ENCODE measurements at regions of chr7 and their contacts with region 1.

Region 1: GRCh38 chr7:116588641-116589594 is 64.1 kb downstream of the CAV1 start:
- DNase-seq: peak; percentile 81
- ATAC-seq: peak; percentile 60
- H3K4me3 ChIP-seq: no peak overlapping the region
- H3K27ac ChIP-seq: peak overlapping the region; percentile 80
- H3K4me1 ChIP-seq: peaks cover 9% of the 10 kb centered on the region
- H3K27me3 ChIP-seq: no peaks in the 10 kb centered on the region
- CTCF ChIP-seq: peak; percentile 78
- POLR2A ChIP-seq: 0 out of 2 replicates have a peak, but pooled peaks have one; percentile 17
- RAD21 ChIP-seq: peak; percentile 87

Region 2: GRCh38 chr7:116173051-116174028 is 415.6 kb before region 1 on chr7:
- CTCF ChIA-PET with region 1: interaction called, 6 read pairs
- POLR2A ChIA-PET with region 1: interaction called, 3 read pairs
- dilution Hi-C with region 1: no loop called
- in situ Hi-C with region 1: loop called (anchors 10 kb)
- intact Hi-C with region 1: loop called (anchors 2 kb)
- DNase-seq: peak; percentile 69
- ATAC-seq: peak; percentile 31
- H3K4me3 ChIP-seq: no peak overlapping the region
- H3K27ac ChIP-seq: no peak overlapping the region
- H3K4me1 ChIP-seq: peaks cover 15% of the 10 kb centered on the region
- H3K27me3 ChIP-seq: no peaks in the 10 kb centered on the region
- CTCF ChIP-seq: peak; percentile 71
- POLR2A ChIP-seq: no peak
- RAD21 ChIP-seq: peak; percentile 87

Region 3: GRCh38 chr7:116258734-116259133 is 330.2 kb before region 1 on chr7:
- CTCF ChIA-PET with region 1: interaction called, 11 read pairs
- POLR2A ChIA-PET with region 1: no interaction called
- dilution Hi-C with region 1: no loop called
- in situ Hi-C with region 1: no loop called
- intact Hi-C with region 1: loop called (anchors 1 kb)
- DNase-seq: peak; percentile 79
- ATAC-seq: peak; percentile 75
- H3K4me3 ChIP-seq: no peak overlapping the region
- H3K27ac ChIP-seq: peak overlapping the region; percentile 49; the same call in 1 of the 2 replicates
- H3K4me1 ChIP-seq: peaks cover 11% of the 10 kb centered on the region; the same call in 1 of the 2 replicates
- H3K27me3 ChIP-seq: no peaks in the 10 kb centered on the region
- CTCF ChIP-seq: peak; percentile 91
- POLR2A ChIP-seq: 0 out of 2 replicates have a peak, but pooled peaks have one; percentile 39
- RAD21 ChIP-seq: peak; percentile 95

Region 4: DNA sequence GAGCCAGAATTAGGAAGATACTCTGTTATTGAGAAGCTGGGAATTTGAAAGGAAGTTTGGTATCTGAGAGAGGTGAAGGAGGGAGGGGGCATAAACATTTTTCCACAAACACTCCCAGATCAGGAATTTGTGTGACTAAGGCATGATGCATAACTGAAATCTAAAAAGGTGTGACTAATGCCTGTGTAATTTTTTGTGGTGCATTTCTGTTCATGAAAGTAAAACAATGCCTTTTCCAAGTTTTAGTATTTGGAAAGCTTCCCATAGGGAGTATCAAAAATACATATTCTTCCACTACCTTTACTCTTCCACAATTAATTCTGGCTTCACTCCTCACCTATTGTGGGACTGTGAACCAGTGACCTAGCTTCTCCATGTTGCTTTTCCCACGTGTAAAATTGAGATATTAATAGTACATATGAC is 145.8 kb before region 1 on chr7:
- CTCF ChIA-PET with region 1: interaction called, 3 read pairs
- POLR2A ChIA-PET with region 1: no interaction called
- dilution Hi-C with region 1: no loop called
- in situ Hi-C with region 1: no loop called
- intact Hi-C with region 1: loop called (anchors 10 kb)
- DNase-seq: peak; percentile 97
- ATAC-seq: peak; percentile 76
- H3K4me3 ChIP-seq: no peak overlapping the region
- H3K27ac ChIP-seq: 0 out of 2 replicates have a peak overlapping the region, but pooled peaks have one; percentile 87
- H3K4me1 ChIP-seq: peaks cover 14% of the 10 kb centered on the region
- H3K27me3 ChIP-seq: no peaks in the 10 kb centered on the region
- CTCF ChIP-seq: no peak
- POLR2A ChIP-seq: no peak
- RAD21 ChIP-seq: no peak

Region 5: DNA sequence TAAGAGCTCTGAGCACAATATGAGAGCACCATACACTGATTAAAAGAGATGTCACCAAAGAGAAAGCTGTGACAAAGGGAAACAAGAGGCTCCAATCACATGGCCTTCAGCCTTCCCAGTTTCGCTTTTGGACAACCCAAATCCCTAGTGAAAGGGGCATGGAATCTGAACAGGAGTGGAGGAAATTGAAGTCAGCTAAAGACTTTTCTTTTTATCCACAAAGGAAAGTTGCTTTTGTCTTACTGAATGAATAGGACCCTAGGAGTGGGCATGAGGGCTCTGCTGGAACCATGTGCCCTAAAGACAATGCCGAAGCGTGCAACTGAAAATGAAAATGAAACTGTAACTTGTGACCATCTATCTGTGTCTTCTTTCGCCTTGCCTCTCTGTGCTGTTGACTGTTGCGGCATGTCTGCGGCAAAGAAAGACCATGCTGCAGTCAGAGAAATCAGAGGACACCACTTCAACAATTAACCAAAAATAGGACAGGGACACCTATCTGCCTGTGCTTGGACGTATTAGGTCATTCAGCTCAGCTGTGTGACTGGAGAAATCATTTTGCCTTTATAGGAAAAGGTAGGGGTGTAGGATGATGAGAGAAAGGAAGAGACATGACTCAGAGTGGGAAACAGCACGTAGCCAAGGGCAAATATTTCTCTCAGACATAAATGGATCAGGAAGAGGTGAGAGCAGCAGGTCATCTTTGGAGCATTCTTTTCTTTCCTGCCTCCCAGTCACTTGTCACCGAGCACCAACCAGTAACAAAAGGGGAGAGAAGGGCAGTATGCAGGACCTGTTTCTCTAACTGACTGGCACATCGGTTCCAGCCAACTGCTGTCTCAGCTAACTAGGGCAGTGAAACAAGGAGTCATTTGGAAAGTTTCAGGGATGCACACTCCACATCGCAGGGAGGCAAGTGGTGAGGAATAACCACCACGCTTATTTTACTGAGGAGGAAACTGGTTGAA is 77.1 kb before region 1 on chr7:
- CTCF ChIA-PET with region 1: no interaction called
- POLR2A ChIA-PET with region 1: no interaction called
- dilution Hi-C with region 1: no loop called
- in situ Hi-C with region 1: no loop called
- intact Hi-C with region 1: no loop called
- DNase-seq: peak; percentile 69
- ATAC-seq: peak; percentile 69
- H3K4me3 ChIP-seq: peak overlapping the region; percentile 7; the same call in 1 of the 2 replicates
- H3K27ac ChIP-seq: peak overlapping the region; percentile 78
- H3K4me1 ChIP-seq: peaks cover 8% of the 10 kb centered on the region
- H3K27me3 ChIP-seq: no peaks in the 10 kb centered on the region
- CTCF ChIP-seq: no peak
- POLR2A ChIP-seq: no peak
- RAD21 ChIP-seq: no peak

Region 6: DNA sequence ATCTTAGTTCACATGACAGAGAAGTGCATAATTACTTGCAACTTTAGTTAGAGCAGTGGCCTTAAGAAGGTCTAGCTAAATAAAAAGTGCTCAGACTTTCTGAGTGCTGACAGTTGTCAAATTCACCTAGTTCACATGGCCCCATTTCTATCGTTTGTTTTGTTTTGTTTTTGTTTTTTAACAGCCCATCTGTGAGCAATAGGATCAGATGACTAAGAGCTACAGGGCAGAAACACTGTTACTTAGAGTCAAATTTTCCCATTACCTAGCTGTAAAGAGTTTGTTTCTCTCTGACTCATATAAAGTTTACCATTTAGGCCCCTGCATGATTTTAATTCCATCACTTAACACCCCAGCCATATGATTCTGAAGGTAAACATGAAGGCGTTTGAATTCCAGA is 45.3 kb before region 1 on chr7:
- CTCF ChIA-PET with region 1: interaction called, 3 read pairs
- POLR2A ChIA-PET with region 1: no interaction called
- dilution Hi-C with region 1: no loop called
- in situ Hi-C with region 1: loop called (anchors 10 kb)
- intact Hi-C with region 1: loop called (anchors 5 kb)
- DNase-seq: peak; percentile 74
- ATAC-seq: no peak
- H3K4me3 ChIP-seq: no peak overlapping the region
- H3K27ac ChIP-seq: peak overlapping the region; percentile 29; the same call in 1 of the 2 replicates
- H3K4me1 ChIP-seq: peaks cover 41% of the 10 kb centered on the region
- H3K27me3 ChIP-seq: no peaks in the 10 kb centered on the region
- CTCF ChIP-seq: no peak
- POLR2A ChIP-seq: no peak
- RAD21 ChIP-seq: no peak

Region 7: GRCh38 chr7:116786791-116787443 is 198.0 kb after region 1 on chr7:
- CTCF ChIA-PET with region 1: interaction called, 11 read pairs
- POLR2A ChIA-PET with region 1: no interaction called
- dilution Hi-C with region 1: no loop called
- in situ Hi-C with region 1: no loop called
- intact Hi-C with region 1: no loop called
- DNase-seq: peak; percentile 46
- ATAC-seq: no peak
- H3K4me3 ChIP-seq: no peak overlapping the region
- H3K27ac ChIP-seq: no peak overlapping the region
- H3K4me1 ChIP-seq: peaks cover 4% of the 10 kb centered on the region
- H3K27me3 ChIP-seq: no peaks in the 10 kb centered on the region
- CTCF ChIP-seq: peak; percentile 46
- POLR2A ChIP-seq: no peak
- RAD21 ChIP-seq: peak; percentile 48; the same call in 1 of the 2 replicates

Measured in IMR-90 (cell line).